Activated CD4-positive, alpha-beta memory T cell treated with anti-CD3 and anti-CD28 coated beads, Interleukin-2, amount 10 ng/mL, durations not matched to agents 7 days and 5 days (primary cell): ENCODE measurements at regions of chr2 and their contacts with region 1.

Region 1: DNA sequence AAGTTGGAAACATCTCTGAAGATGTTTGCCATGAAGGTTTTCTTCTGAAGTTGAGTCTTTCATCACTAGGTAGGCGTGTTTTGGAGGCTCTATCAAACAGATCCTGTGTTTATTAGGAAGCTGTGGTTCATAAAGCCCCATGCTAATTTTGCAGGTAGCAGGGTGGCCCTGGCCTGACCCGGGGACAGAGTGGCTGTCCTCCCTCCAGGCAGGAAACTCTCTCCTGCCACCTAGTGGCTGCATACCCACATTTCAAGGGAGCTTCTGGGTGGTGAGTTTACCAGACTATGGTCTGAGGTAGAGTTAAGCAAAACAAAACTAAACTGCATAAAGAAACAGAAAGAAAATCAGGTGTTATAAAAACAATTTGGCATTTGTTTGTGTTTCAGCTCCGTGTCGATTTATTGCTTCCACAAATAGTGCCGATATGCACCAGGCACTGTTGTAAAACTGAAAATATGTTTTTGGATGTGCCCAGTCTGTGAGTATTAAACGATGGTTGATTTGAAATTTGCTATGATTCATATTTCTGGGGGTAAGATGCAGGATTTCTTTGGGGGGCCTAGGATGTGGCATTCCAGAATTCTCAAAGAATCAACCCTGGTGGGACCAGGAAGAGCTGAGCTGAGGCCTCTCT is 26.0 kb upstream of the IL37 start:
- DNase-seq: peak; percentile 82
- H3K4me3 Mint-ChIP-seq: no peak overlapping the region
- H3K27ac Mint-ChIP-seq: peak overlapping the region; percentile 60
- H3K4me1 Mint-ChIP-seq: peaks cover 46% of the 10 kb centered on the region
- H3K27me3 Mint-ChIP-seq: no peaks in the 10 kb centered on the region

Region 2: GRCh38 chr2:112764071-112765044 is 120.6 kb before region 1 on chr2 and contains the start of gene CKAP2L:
- CTCF ChIA-PET with region 1: interaction called, 11 read pairs
- POLR2A ChIA-PET with region 1: interaction called, 10 read pairs
- DNase-seq: peak; percentile 99
- H3K4me3 Mint-ChIP-seq: peak within 1 kb of the TSS; percentile 89
- H3K27ac Mint-ChIP-seq: peak within 1 kb of the TSS; percentile 98
- H3K4me1 Mint-ChIP-seq: peaks cover 68% of the 10 kb centered on the region
- H3K27me3 Mint-ChIP-seq: no peaks in the 10 kb centered on the region
- total RNA-seq, gene CKAP2L: 63.3 to 66.3 TPM